Dorsolateral prefrontal cortex (tissue), 120 donors: ENCODE measurements at regions of chr1 and their contacts with region 1.

Region 1: DNA sequence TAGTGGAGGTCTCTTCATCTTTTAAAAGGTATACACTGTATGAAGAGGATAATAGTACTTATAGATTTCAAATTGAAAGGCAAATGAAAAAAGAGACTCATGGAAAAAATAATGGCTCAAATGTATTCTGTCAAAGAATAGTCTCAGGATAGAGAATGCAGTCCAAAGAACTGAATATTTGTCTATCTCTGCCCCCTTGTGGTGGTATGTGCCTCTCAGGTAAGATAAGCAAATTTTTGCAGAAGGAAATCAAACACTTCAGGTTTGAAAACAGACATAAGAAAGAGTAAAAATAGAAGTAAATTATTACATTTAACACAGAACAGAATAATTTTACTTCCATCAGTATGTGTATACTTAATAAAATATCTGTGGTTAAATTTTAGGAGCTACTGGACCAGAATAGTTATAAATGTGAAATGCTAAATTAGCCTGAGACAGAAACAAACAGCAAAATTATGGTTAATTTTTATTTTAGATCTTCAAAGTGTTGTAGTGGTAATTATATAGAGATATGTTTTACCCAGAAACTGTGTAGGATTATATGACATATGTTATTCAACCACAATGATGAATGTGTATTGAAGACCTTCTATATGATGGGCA is 164.4 kb upstream of the PALMD start:
- DNase-seq: peak in 3 of 10 donors; percentile 11 to 53 (median 33)
- H3K4me3 ChIP-seq: no peak overlapping the region
- H3K27ac ChIP-seq: peak overlapping the region in 3 of 59 donors; percentile 5 to 17 (median 13)
- H3K27me3 ChIP-seq: peaks cover 0 to 5% (median 0%) of the 10 kb centered on the region in 45 donors
- CTCF ChIP-seq: peak; percentile 73 to 96 (median 88)

Region 2: GRCh38 chr1:98794196-98794886 is 687.2 kb before region 1 on chr1:
- intact Hi-C with region 1: loop called (anchors 10 kb)
- DNase-seq: peak in 2 of 10 donors; percentile 36 to 52
- H3K4me3 ChIP-seq: no peak overlapping the region
- H3K27ac ChIP-seq: no peak overlapping the region
- H3K27me3 ChIP-seq: peaks cover 0 to under 1% (median 0%) of the 10 kb centered on the region in 45 donors
- CTCF ChIP-seq: peak; percentile 29 to 78 (median 66)